ENCODE measurements at regions of chr14 and their contacts with region 1.

Region 1: GRCh38 chr14:61719344-61720293 is 24.3 kb downstream of the HIF1A start:
- DNase-seq: no peak
- H3K4me3 Mint-ChIP-seq: no peak overlapping the region
- H3K27ac Mint-ChIP-seq: peak overlapping the region; percentile 40
- H3K4me1 Mint-ChIP-seq: peaks cover 67% of the 10 kb centered on the region
- H3K27me3 Mint-ChIP-seq: no peaks in the 10 kb centered on the region

Region 2: GRCh38 chr14:61703342-61704129 is 16.1 kb before region 1 on chr14:
- CTCF ChIA-PET with region 1: interaction called, 3 read pairs
- POLR2A ChIA-PET with region 1: interaction called, 19 read pairs
- DNase-seq: no peak
- H3K4me3 Mint-ChIP-seq: no peak overlapping the region
- H3K27ac Mint-ChIP-seq: no peak overlapping the region
- H3K4me1 Mint-ChIP-seq: peaks cover 78% of the 10 kb centered on the region
- H3K27me3 Mint-ChIP-seq: no peaks in the 10 kb centered on the region

Region 3: GRCh38 chr14:61730756-61731373 is 11.2 kb after region 1 on chr14:
- CTCF ChIA-PET with region 1: interaction called, 4 read pairs
- POLR2A ChIA-PET with region 1: interaction called, 10 read pairs
- DNase-seq: no peak
- H3K4me3 Mint-ChIP-seq: no peak overlapping the region
- H3K27ac Mint-ChIP-seq: no peak overlapping the region
- H3K4me1 Mint-ChIP-seq: peaks cover 58% of the 10 kb centered on the region
- H3K27me3 Mint-ChIP-seq: no peaks in the 10 kb centered on the region

Measured in activated CD4-positive, alpha-beta memory T cell treated with anti-CD3 and anti-CD28 coated beads, Interleukin-2, amount 10 ng/mL, durations not matched to agents 7 days and 5 days (primary cell).